H1 (cell line): ENCODE measurements at regions of chr6 and their contacts with region 1.

Region 1: DNA sequence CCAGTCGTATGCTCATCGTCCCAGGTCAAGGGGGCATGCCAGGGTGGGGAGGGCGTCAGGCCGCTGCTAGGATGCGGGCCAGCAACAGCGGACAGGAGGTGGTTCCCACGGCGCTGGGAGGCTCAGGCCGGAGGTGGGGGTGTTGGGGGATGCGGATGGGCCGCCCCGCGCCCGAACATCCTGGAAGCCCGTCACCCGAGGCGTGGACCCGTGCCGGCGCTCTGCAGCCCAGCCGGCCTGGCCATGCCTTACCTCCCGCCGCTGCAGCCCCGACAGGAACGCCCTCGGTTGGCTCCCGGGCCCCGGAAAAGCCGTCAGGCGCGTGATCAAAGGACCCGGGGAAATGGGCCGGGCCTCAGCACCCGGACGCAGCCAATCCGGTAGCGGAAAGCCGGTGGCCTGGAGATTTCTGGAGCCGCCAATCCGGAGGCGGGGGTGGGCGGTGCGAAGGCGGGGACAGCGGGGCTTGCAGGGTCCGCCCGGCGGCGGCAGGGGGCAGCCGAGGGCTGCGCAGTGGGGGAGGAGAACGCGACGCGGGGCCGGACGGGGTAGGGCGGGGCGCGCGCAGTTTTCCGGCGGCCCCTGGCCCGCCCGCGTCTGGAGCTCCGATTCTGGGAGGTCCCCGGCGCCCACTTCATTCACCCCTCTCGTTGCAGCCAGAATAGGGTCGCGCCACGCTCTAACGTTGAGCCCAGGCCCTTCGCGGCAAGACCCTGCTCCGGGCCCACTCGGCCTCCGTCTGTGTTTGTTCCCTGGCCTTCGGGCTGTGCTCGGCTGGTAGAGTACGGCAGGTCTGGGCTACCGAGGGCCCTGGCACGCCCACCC is at the start of gene SMIM29:
- DNase-seq: peak in 1 of 2 experiments; percentile 100
- H3K4me3 ChIP-seq: peak within 1 kb of the TSS; percentile 44 to 83 (median 72)
- H3K27ac ChIP-seq: no peak within 1 kb of the TSS; the same call in 1 of the 2 replicates
- H3K4me1 ChIP-seq: peaks cover 0 to 13% (median 7%) of the 10 kb centered on the region in 4 experiments; a peak in 6 of 7 replicates
- H3K27me3 ChIP-seq: no peaks in the 10 kb centered on the region; a peak in 2 of 7 replicates
- CTCF ChIP-seq: peak in 2 of 3 experiments; percentile 76 to 84; a peak in 3 of 4 replicates
- EP300 ChIP-seq: no peak; a peak in 1 of 3 replicates
- POLR2A ChIP-seq: no peak
- RAD21 ChIP-seq: peak; percentile 83 to 90
- total RNA-seq, gene SMIM29: 7.0 and 7.5 TPM in 2 replicates

Region 2: DNA sequence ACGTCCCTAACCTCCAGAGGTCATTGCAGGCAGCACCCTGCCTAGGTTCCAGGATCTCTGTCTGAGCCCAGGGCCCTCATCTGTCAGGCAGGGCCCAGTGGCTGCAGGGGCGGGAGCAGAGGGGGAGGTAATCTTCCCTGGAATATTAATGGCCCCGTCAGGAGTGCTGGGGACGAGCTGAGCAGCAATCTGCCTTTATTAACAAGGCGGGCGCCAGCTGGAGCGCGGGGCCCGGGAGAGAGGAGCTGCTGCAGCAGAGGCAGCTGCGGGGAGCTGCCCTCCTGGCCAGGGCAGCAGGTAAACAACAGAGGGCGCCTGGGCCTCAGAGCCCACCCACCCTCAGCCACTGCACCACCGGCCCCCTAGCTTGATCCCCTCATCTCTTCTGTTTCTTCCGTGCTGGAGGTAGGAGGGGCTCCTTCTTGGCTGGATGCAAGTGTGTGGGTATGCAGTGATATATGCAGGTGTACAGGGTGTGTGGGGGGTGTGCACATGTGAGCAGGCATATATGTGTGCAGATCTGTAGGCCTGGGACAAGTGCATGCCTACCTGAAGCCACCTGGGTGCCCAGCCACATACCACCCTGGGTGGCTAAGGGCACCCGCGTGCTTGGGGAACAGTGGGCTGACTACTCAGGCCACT is 313.4 kb before region 1 on chr6:
- CTCF ChIA-PET with region 1: no interaction called
- POLR2A ChIA-PET with region 1: no interaction called
- DNase-seq: no peak
- H3K4me3 ChIP-seq: no peak overlapping the region
- H3K27ac ChIP-seq: no peak overlapping the region
- H3K4me1 ChIP-seq: peaks cover 0 to 10% (median 4%) of the 10 kb centered on the region in 4 experiments; a peak in 4 of 7 replicates
- H3K27me3 ChIP-seq: no peaks in the 10 kb centered on the region; a peak in 1 of 7 replicates
- CTCF ChIP-seq: peak in 1 of 3 experiments; percentile 9; a peak in 1 of 4 replicates
- EP300 ChIP-seq: no peak
- POLR2A ChIP-seq: no peak
- RAD21 ChIP-seq: peak in 1 of 2 experiments; percentile 20; a peak in 1 of 4 replicates

Region 3: DNA sequence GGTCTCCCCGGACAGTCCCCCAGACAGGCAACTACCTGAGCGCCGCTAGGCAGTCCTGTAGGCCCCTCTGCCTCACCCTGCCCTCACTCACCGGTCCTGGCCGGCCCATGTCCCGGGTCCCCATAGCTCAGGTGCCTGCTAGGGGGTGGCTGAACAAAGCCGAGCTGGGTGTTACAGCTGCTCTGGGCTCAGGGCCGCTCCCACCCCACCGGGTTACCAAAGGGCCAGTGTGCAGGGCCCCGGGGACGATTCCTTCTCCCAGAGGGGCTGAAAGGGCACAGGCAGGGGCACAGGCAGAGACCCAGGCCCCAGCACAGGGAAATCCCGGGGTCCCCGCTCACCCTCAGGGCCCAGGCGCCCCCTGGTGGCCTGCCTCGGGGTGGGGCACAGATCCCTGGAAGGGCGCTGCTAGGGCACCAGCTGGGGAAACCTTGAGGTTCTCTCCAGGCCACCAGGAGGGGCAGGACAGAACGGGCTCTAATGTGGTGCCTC is 221.4 kb before region 1 on chr6:
- CTCF ChIA-PET with region 1: no interaction called
- POLR2A ChIA-PET with region 1: no interaction called
- DNase-seq: peak; percentile 29 to 97
- H3K4me3 ChIP-seq: no peak overlapping the region
- H3K27ac ChIP-seq: no peak overlapping the region
- H3K4me1 ChIP-seq: peaks cover 0 to 2% (median 0%) of the 10 kb centered on the region in 4 experiments; a peak in 1 of 7 replicates
- H3K27me3 ChIP-seq: no peaks in the 10 kb centered on the region
- CTCF ChIP-seq: peak in 2 of 3 experiments; percentile 86 to 98; a peak in 3 of 4 replicates
- EP300 ChIP-seq: no peak
- POLR2A ChIP-seq: no peak
- RAD21 ChIP-seq: peak; percentile 89 to 93

Region 4: GRCh38 chr6:34182751-34183531 is 66.0 kb before region 1 on chr6:
- CTCF ChIA-PET with region 1: interaction called, 3 read pairs
- POLR2A ChIA-PET with region 1: interaction called, 10 read pairs
- DNase-seq: no peak
- H3K4me3 ChIP-seq: no peak overlapping the region
- H3K27ac ChIP-seq: no peak overlapping the region
- H3K4me1 ChIP-seq: no peaks in the 10 kb centered on the region
- H3K27me3 ChIP-seq: no peaks in the 10 kb centered on the region
- CTCF ChIP-seq: no peak
- EP300 ChIP-seq: no peak
- POLR2A ChIP-seq: no peak
- RAD21 ChIP-seq: no peak

Region 5: DNA sequence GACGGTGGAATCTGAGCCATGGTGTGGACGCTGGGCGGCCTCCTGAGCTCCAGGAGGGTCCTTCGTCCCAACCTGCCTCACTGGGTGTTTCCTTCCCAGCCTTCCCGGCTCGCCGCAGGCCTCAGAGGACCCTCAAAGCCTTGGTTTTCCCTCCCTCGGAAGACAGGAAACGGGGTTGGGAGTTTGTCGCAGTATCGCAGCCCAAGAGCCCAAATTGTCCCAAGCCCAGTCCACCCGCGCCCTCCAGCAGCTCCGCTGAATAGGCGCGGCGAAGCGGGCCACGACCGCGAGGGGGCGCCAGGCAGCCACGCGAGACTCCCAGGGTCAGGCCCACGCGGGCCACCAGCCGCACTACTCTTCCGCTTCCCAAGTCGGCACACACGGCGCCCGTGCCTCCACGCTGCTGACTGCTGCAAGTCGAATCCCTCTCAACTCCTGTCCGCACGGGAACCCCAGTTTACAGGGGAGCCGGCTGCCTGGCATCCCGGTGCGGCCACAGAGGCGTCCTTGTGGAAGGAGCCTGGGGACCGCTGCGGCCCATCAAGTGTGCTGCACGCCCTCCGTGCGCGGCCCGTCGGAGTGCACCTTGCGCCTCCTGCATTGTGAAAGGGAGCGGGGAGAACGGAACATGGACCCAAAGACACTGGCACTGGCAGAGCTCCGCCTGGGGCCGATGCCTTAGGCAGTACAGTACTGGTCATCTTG is 52.7 kb before region 1 on chr6:
- CTCF ChIA-PET with region 1: interaction called, 62 read pairs
- POLR2A ChIA-PET with region 1: interaction called, 212 read pairs
- DNase-seq: peak in 1 of 2 experiments; percentile 91
- H3K4me3 ChIP-seq: peak overlapping the region in 2 of 4 experiments; percentile 23 to 34; a peak in 4 of 8 replicates
- H3K27ac ChIP-seq: no peak overlapping the region
- H3K4me1 ChIP-seq: peaks cover 0 to 12% (median 5%) of the 10 kb centered on the region in 4 experiments; a peak in 5 of 7 replicates
- H3K27me3 ChIP-seq: peaks cover 0 to 13% (median 4%) of the 10 kb centered on the region in 4 experiments; a peak in 4 of 7 replicates
- CTCF ChIP-seq: peak; percentile 78 to 85 (median 79)
- EP300 ChIP-seq: peak in 1 of 2 experiments; percentile 28; a peak in 1 of 3 replicates
- POLR2A ChIP-seq: no peak
- RAD21 ChIP-seq: peak; percentile 74 to 76

Region 6: DNA sequence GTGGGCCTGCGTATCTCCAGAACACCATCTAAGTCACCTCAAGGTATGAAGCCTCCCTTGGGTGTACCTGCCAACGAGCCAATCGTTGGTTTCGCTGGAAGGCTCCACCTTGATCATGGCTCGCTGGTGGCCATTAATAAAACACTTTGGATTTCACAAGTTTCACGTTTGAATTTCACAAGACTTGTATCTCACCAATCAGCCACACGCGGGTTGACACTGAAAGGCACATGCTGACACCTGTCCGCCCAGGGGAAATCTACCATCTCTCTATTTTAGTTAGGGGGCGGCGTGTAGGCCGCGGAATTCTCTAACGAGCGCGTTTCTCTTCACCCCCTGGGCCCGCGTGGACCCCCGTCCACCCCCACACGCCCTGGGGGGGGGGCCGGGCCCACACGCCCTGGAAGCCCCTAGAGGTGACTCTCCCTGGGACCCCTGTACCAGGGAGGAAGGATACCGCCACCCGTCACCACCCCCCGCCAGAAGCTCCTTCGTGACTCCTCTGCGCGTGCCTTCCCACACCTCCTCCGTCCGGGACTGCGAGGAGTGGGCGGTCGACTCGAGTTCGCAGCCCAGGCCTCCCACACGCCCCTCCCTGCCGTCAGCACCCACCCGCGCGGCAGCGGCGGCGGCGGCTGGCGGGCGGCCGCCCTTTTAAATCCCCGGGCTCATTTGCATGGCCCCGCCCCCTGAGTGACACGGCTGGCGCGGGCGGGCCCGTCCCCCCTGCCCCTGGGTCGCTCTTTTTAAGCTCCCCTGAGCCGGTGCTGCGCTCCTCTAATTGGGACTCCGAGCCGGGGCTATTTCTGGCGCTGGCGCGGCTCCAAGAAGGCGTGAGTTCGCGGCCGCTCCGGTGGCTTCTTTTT is 12.6 kb before region 1 on chr6 and contains the start of gene HMGA1:
- CTCF ChIA-PET with region 1: interaction called, 9 read pairs
- POLR2A ChIA-PET with region 1: interaction called, 191 read pairs
- DNase-seq: peak in 1 of 2 experiments; percentile 84
- H3K4me3 ChIP-seq: peak within 1 kb of the TSS; percentile 86 to 100 (median 98)
- H3K27ac ChIP-seq: peak within 1 kb of the TSS; percentile 96
- H3K4me1 ChIP-seq: peaks cover 0 to 36% (median 26%) of the 10 kb centered on the region in 4 experiments; a peak in 6 of 7 replicates
- H3K27me3 ChIP-seq: no peaks in the 10 kb centered on the region
- CTCF ChIP-seq: no peak
- EP300 ChIP-seq: 0 out of 3 replicates have a peak, but pooled peaks of 1 of the 2 experiments have one; percentile 27
- POLR2A ChIP-seq: peak in 1 of 2 experiments; percentile 96; a peak in 2 of 3 replicates
- RAD21 ChIP-seq: peak in 1 of 2 experiments; percentile 20; a peak in 1 of 4 replicates
- total RNA-seq, gene HMGA1: 2,636 and 2,728 TPM in 2 replicates

Region 7: GRCh38 chr6:34414999-34415858 is 166.3 kb after region 1 on chr6:
- CTCF ChIA-PET with region 1: interaction called, 31 read pairs
- POLR2A ChIA-PET with region 1: interaction called, 63 read pairs
- DNase-seq: no peak
- H3K4me3 ChIP-seq: no peak overlapping the region
- H3K27ac ChIP-seq: no peak overlapping the region
- H3K4me1 ChIP-seq: no peaks in the 10 kb centered on the region
- H3K27me3 ChIP-seq: no peaks in the 10 kb centered on the region
- CTCF ChIP-seq: peak in 2 of 3 experiments; percentile 6 to 20; a peak in 2 of 4 replicates
- EP300 ChIP-seq: no peak
- POLR2A ChIP-seq: peak in 1 of 2 experiments; percentile 36; a peak in 2 of 3 replicates
- RAD21 ChIP-seq: peak; percentile 45 to 54; a peak in 3 of 4 replicates

Region 8: GRCh38 chr6:34459899-34460593 is 211.1 kb after region 1 on chr6:
- CTCF ChIA-PET with region 1: interaction called, 15 read pairs
- POLR2A ChIA-PET with region 1: interaction called, 5 read pairs
- DNase-seq: peak in 1 of 2 experiments; percentile 59
- H3K4me3 ChIP-seq: no peak overlapping the region
- H3K27ac ChIP-seq: no peak overlapping the region
- H3K4me1 ChIP-seq: peaks cover 0 to 19% (median 6%) of the 10 kb centered on the region in 4 experiments; a peak in 6 of 7 replicates
- H3K27me3 ChIP-seq: peaks cover 0 to under 1% (median under 1%) of the 10 kb centered on the region in 4 experiments; a peak in 3 of 7 replicates
- CTCF ChIP-seq: peak in 2 of 3 experiments; percentile 84 to 88; a peak in 3 of 4 replicates
- EP300 ChIP-seq: no peak
- POLR2A ChIP-seq: no peak
- RAD21 ChIP-seq: peak; percentile 97 to 98

Region 9: DNA sequence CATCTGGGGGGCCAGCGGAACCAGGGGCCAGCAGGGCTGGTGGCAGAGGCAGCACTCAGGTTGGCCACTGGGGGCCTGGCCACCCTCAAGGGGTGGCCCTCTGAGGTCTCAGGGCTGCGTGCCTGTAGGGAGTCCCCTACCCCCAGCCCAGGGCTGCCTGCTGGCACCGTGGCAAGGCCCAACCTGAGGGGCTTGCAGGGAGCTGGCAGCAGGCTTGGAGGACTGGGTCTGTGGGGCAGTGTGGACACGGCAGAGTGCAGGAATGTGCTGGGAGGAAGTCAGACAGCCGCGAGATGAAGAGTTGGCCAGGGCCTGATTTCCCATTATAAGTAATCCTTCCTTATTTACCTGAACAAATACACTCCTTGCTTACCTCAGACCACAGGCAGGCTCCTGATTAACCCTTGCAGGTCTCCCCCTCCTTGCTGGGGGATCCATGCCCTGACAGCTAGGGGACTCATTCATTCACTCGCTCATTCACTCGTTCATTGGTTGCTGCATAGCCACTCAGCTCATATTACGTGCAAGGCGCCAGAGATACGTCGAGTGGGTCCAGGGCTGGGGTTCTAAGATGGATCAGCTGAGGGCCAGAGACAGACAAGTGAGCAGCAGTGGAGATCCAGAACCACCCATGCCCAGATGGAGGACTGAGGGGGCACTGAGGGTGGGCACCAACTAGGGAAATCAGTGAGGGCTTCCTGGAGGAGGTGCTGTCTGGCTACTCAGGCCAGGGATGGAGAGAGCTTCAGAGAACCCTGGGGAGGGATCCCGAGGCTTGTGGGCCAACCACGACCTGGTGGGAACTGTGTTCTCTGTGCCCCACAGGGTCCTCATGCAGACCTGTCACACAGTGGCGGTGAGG is 307.3 kb after region 1 on chr6 and contains the start of gene SPDEF:
- CTCF ChIA-PET with region 1: no interaction called
- POLR2A ChIA-PET with region 1: no interaction called
- DNase-seq: no peak
- H3K4me3 ChIP-seq: no peak within 1 kb of the TSS
- H3K27ac ChIP-seq: no peak within 1 kb of the TSS
- H3K4me1 ChIP-seq: peaks cover 0 to 9% (median 5%) of the 10 kb centered on the region in 4 experiments; a peak in 4 of 7 replicates
- H3K27me3 ChIP-seq: no peaks in the 10 kb centered on the region
- CTCF ChIP-seq: peak in 1 of 3 experiments; percentile 13; a peak in 1 of 4 replicates
- EP300 ChIP-seq: no peak
- POLR2A ChIP-seq: no peak
- RAD21 ChIP-seq: no peak; a peak in 1 of 4 replicates
- total RNA-seq, gene SPDEF: 0.15 TPM in 1 of 2 replicates, not detected in the other

Region 10: GRCh38 chr6:34757687-34758274 is 508.8 kb after region 1 on chr6:
- CTCF ChIA-PET with region 1: no interaction called
- POLR2A ChIA-PET with region 1: no interaction called
- DNase-seq: no peak
- H3K4me3 ChIP-seq: peak overlapping the region; percentile 81 to 98 (median 95)
- H3K27ac ChIP-seq: peak overlapping the region; percentile 92
- H3K4me1 ChIP-seq: no peaks in the 10 kb centered on the region
- H3K27me3 ChIP-seq: no peaks in the 10 kb centered on the region
- CTCF ChIP-seq: no peak
- EP300 ChIP-seq: no peak
- POLR2A ChIP-seq: no peak; a peak in 1 of 3 replicates
- RAD21 ChIP-seq: no peak